ENCODE measurements at regions of chr10 and their contacts with region 1.

Region 1: GRCh38 chr10:48363617-48364355 is 57.3 kb downstream of the MAPK8 start:
- DNase-seq: no peak
- H3K4me3 ChIP-seq: no peak overlapping the region
- CTCF ChIP-seq: peak; percentile 55

Region 2: GRCh38 chr10:48353246-48353645 is 10.5 kb before region 1 on chr10:
- CTCF ChIA-PET with region 1: interaction called, 22 read pairs
- POLR2A ChIA-PET with region 1: no interaction called
- DNase-seq: no peak
- H3K4me3 ChIP-seq: no peak overlapping the region
- CTCF ChIP-seq: no peak

Region 3: GRCh38 chr10:48377751-48378535 is 14.2 kb after region 1 on chr10:
- CTCF ChIA-PET with region 1: interaction called, 10 read pairs
- POLR2A ChIA-PET with region 1: no interaction called
- DNase-seq: no peak
- H3K4me3 ChIP-seq: no peak overlapping the region
- CTCF ChIP-seq: no peak

Region 4: GRCh38 chr10:48506147-48506917 is 142.5 kb after region 1 on chr10:
- CTCF ChIA-PET with region 1: interaction called, 58 read pairs
- POLR2A ChIA-PET with region 1: no interaction called
- DNase-seq: no peak
- H3K4me3 ChIP-seq: no peak overlapping the region
- CTCF ChIP-seq: peak; percentile 45

Region 5: GRCh38 chr10:48634198-48634983 is 270.6 kb after region 1 on chr10:
- CTCF ChIA-PET with region 1: no interaction called
- POLR2A ChIA-PET with region 1: no interaction called
- DNase-seq: peak; percentile 49
- H3K4me3 ChIP-seq: no peak overlapping the region
- CTCF ChIP-seq: no peak

Measured in AG04449 (cell line).